A549 (cell line): ENCODE measurements at regions of chr10 and their contacts with region 1.

Region 1: GRCh38 chr10:30359373-30360206 is 10.5 kb upstream of the MTPAP start:
- DNase-seq: peak; percentile 67 to 79
- ATAC-seq: peak; percentile 94 to 95
- H3K4me3 ChIP-seq: no peak overlapping the region
- H3K27ac ChIP-seq: peak overlapping the region in 1 of 2 experiments; percentile 70; a peak in 2 of 6 replicates
- H3K4me1 ChIP-seq: peaks cover 6% of the 10 kb centered on the region; the same call in 2 of the 3 replicates
- CTCF ChIP-seq: peak; percentile 82
- EP300 ChIP-seq: no peak
- POLR2A ChIP-seq: no peak
- RAD21 ChIP-seq: peak in 1 of 2 experiments; percentile 26; a peak in 2 of 5 replicates

Region 2: GRCh38 chr10:30270247-30270646 is 89.3 kb before region 1 on chr10:
- CTCF ChIA-PET with region 1: no interaction called
- POLR2A ChIA-PET with region 1: no interaction called
- DNase-seq: peak in 1 of 2 experiments; percentile 5
- ATAC-seq: peak in 1 of 2 experiments; percentile 30; a peak in 1 of 6 replicates
- H3K4me3 ChIP-seq: no peak overlapping the region
- H3K27ac ChIP-seq: no peak overlapping the region
- H3K4me1 ChIP-seq: no peaks in the 10 kb centered on the region
- CTCF ChIP-seq: peak; percentile 23; the same call in 2 of the 3 replicates
- EP300 ChIP-seq: no peak
- POLR2A ChIP-seq: no peak
- RAD21 ChIP-seq: no peak

Region 3: GRCh38 chr10:30348378-30348776 is 11.2 kb before region 1 on chr10:
- CTCF ChIA-PET with region 1: interaction called, 14 read pairs
- POLR2A ChIA-PET with region 1: interaction called, 7 read pairs
- DNase-seq: no peak
- ATAC-seq: peak; percentile 12 to 31; a peak in 4 of 6 replicates
- H3K4me3 ChIP-seq: peak overlapping the region; percentile 62
- H3K27ac ChIP-seq: peak overlapping the region; percentile 87 to 94
- H3K4me1 ChIP-seq: peaks cover 18% of the 10 kb centered on the region; the same call in 2 of the 3 replicates
- CTCF ChIP-seq: no peak
- EP300 ChIP-seq: no peak
- POLR2A ChIP-seq: no peak
- RAD21 ChIP-seq: no peak

Region 4: GRCh38 chr10:30374353-30374752 is 14.8 kb after region 1 on chr10:
- CTCF ChIA-PET with region 1: interaction called, 29 read pairs
- POLR2A ChIA-PET with region 1: no interaction called
- DNase-seq: peak in 1 of 2 experiments; percentile 60
- ATAC-seq: peak in 1 of 2 experiments; percentile 63; a peak in 3 of 6 replicates
- H3K4me3 ChIP-seq: no peak overlapping the region
- H3K27ac ChIP-seq: no peak overlapping the region
- H3K4me1 ChIP-seq: peaks cover 4% of the 10 kb centered on the region; the same call in 1 of the 3 replicates
- CTCF ChIP-seq: no peak
- EP300 ChIP-seq: no peak
- POLR2A ChIP-seq: no peak
- RAD21 ChIP-seq: no peak

Region 5: GRCh38 chr10:30384701-30385201 is 25.2 kb after region 1 on chr10:
- CTCF ChIA-PET with region 1: interaction called, 41 read pairs
- POLR2A ChIA-PET with region 1: no interaction called
- DNase-seq: peak; percentile 58 to 67
- ATAC-seq: peak; percentile 94 to 95
- H3K4me3 ChIP-seq: no peak overlapping the region
- H3K27ac ChIP-seq: no peak overlapping the region
- H3K4me1 ChIP-seq: no peaks in the 10 kb centered on the region
- CTCF ChIP-seq: peak; percentile 36
- EP300 ChIP-seq: no peak
- POLR2A ChIP-seq: no peak
- RAD21 ChIP-seq: peak; percentile 28 to 36; a peak in 3 of 5 replicates

Region 6: GRCh38 chr10:30742471-30742870 is 382.9 kb after region 1 on chr10:
- CTCF ChIA-PET with region 1: no interaction called
- POLR2A ChIA-PET with region 1: no interaction called
- DNase-seq: no peak
- ATAC-seq: no peak
- H3K4me3 ChIP-seq: no peak overlapping the region
- H3K27ac ChIP-seq: no peak overlapping the region
- H3K4me1 ChIP-seq: peaks cover 1% of the 10 kb centered on the region; the same call in 1 of the 3 replicates
- CTCF ChIP-seq: no peak
- EP300 ChIP-seq: no peak
- POLR2A ChIP-seq: no peak
- RAD21 ChIP-seq: no peak